Caco-2 (cell line): ENCODE measurements at regions of chr4 and their contacts with region 1.

Region 1: GRCh38 chr4:110106928-110107296 is 91.5 kb downstream of the ELOVL6 start:
- DNase-seq: peak in 1 of 2 experiments; percentile 6
- H3K4me3 ChIP-seq: no peak overlapping the region
- H3K4me3 Mint-ChIP-seq: no peak overlapping the region
- H3K27ac Mint-ChIP-seq: peak overlapping the region; percentile 49
- H3K4me1 ChIP-seq: peaks cover 37% of the 10 kb centered on the region
- H3K4me1 Mint-ChIP-seq: peaks cover 9% of the 10 kb centered on the region
- H3K27me3 ChIP-seq: no peaks in the 10 kb centered on the region
- H3K27me3 Mint-ChIP-seq: no peaks in the 10 kb centered on the region
- CTCF ChIP-seq: no peak

Region 2: GRCh38 chr4:110119337-110119736 is 12.4 kb after region 1 on chr4:
- CTCF ChIA-PET with region 1: no interaction called
- POLR2A ChIA-PET with region 1: no interaction called
- intact Hi-C with region 1: loop called (anchors 1 kb)
- DNase-seq: peak; percentile 62 to 65
- H3K4me3 ChIP-seq: no peak overlapping the region
- H3K4me3 Mint-ChIP-seq: peak overlapping the region; percentile 29
- H3K27ac Mint-ChIP-seq: no peak overlapping the region
- H3K4me1 ChIP-seq: peaks cover 16% of the 10 kb centered on the region
- H3K4me1 Mint-ChIP-seq: no peaks in the 10 kb centered on the region
- H3K27me3 ChIP-seq: no peaks in the 10 kb centered on the region
- H3K27me3 Mint-ChIP-seq: no peaks in the 10 kb centered on the region
- CTCF ChIP-seq: no peak

Region 3: DNA sequence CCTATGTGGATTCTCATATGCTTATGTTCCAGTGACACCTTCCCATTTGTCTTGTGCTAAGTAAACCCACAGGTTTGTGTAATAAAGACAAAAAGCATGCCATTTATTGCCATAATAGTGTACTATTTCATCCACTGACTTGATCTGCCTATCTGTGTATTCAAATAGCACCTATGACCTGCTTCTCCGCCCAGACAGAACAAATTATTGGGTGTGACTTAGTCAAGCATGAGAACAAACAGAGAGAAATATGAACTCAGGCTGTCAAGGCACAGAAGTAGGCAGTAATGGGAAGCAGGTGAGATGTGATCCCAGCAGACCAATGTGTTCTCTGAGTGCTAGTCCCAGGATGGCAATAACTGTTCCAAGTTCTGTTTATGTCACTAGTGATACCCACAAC is 66.1 kb after region 1 on chr4:
- CTCF ChIA-PET with region 1: no interaction called
- POLR2A ChIA-PET with region 1: no interaction called
- intact Hi-C with region 1: loop called (anchors 5 kb)
- DNase-seq: peak; percentile 27 to 66
- H3K4me3 ChIP-seq: no peak overlapping the region
- H3K4me3 Mint-ChIP-seq: no peak overlapping the region
- H3K27ac Mint-ChIP-seq: peak overlapping the region; percentile 25
- H3K4me1 ChIP-seq: peaks cover 24% of the 10 kb centered on the region
- H3K4me1 Mint-ChIP-seq: peaks cover 15% of the 10 kb centered on the region
- H3K27me3 ChIP-seq: no peaks in the 10 kb centered on the region
- H3K27me3 Mint-ChIP-seq: no peaks in the 10 kb centered on the region
- CTCF ChIP-seq: no peak